Lower leg skin (tissue), 4 donors: ENCODE measurements at regions of chr17 and their contacts with region 1.

Region 1: DNA sequence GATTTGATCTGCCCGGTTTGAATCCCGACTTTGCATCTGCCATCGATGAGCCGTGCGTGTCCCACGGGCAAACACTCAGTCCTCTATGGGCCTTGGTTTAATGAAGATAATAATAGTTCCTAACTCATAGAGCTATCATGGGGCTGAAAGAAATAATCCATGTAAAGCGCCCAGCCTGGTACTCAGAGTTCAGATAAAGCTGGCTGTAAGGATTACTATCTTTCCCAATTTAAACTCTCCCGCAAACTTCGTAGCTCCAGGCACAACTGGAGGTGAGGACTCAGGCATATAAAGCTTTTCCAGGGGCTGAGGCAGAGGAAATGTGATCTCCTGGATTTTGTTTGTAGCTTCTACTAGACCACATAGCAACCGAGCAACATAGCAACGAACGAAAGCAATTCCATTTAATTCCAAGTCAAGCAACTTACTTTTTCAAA is 16.3 kb downstream of the ALOX15 start:
- DNase-seq: no peak
- H3K4me3 ChIP-seq: no peak overlapping the region
- CTCF ChIP-seq: no peak
- POLR2A ChIP-seq: no peak

Region 2: GRCh38 chr17:4420692-4421131 is 204.5 kb before region 1 on chr17:
- intact Hi-C with region 1: loop called (anchors 5 kb)
- DNase-seq: peak in 1 of 2 donors; percentile 37
- H3K4me3 ChIP-seq: no peak overlapping the region
- CTCF ChIP-seq: no peak
- POLR2A ChIP-seq: no peak

Region 3: GRCh38 chr17:4565209-4566141 is 59.7 kb before region 1 on chr17:
- intact Hi-C with region 1: loop called (anchors 2 kb)
- DNase-seq: peak in 1 of 2 donors; percentile 58
- H3K4me3 ChIP-seq: no peak overlapping the region
- CTCF ChIP-seq: peak in 1 of 3 donors; percentile 31
- POLR2A ChIP-seq: no peak